ENCODE measurements at regions of chr6 and their contacts with region 1.

Region 1: DNA sequence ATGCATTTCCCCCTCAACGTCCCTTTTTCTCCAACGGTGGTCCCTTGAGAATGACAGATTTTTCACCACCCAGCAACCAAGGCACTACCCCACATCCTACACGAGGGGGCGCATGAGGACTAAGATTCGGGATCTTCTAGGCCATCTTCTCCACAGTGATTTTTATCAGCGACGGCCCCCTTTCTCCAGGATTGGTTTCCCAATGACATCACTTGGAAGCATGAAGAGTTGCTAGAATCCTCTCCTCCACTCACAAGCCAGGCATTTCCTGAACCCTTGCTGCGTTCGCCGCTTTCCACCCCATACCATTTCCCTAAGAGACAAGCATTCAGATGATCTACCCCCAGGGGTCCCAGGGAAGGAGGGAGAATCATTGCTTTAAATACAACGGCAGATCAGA is 252.0 kb downstream of the HIVEP2 start:
- DNase-seq: peak; percentile 82
- H3K4me3 ChIP-seq: no peak overlapping the region
- H3K27ac ChIP-seq: no peak overlapping the region
- H3K4me1 ChIP-seq: peaks cover 0 to 34% (median 20%) of the 10 kb centered on the region in 4 donors
- H3K27me3 ChIP-seq: no peaks in the 10 kb centered on the region
- CTCF ChIP-seq: peak; percentile 78 to 96 (median 94)
- EP300 ChIP-seq: no peak
- POLR2A ChIP-seq: no peak

Region 2: DNA sequence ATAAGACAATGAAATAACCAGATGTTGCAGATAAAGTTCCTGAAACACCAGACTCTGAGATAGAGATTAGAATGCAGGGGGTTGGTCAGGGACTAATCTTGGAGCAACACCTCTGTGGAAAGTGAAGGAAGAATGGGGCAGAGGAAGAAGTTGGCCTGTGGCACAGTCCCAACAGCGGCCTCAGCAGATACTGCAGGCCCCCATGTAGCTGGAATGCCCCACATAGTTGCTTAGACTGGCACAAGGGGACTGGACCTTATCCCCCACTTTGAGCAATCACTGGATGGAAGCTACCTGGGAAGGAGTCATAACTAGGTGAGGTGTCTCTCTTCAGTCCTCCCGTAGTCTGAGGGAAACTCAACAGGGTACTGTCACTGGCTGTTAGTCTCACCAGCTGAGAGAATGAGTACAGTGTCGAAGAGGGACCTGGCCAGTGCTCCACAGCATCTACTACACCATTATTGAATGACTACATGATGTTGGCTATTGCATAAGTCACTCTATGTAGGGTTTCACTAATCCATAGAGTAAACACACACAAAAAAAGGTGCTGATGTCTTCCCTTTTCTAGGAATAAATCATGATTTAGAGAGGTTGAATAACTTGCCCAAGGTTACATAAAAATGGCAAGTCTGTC is 343.6 kb before region 1 on chr6:
- intact Hi-C with region 1: no loop called
- DNase-seq: no peak
- H3K4me3 ChIP-seq: no peak overlapping the region
- H3K27ac ChIP-seq: no peak overlapping the region
- H3K4me1 ChIP-seq: no peaks in the 10 kb centered on the region
- H3K27me3 ChIP-seq: no peaks in the 10 kb centered on the region
- CTCF ChIP-seq: no peak
- EP300 ChIP-seq: no peak
- POLR2A ChIP-seq: no peak

Region 3: DNA sequence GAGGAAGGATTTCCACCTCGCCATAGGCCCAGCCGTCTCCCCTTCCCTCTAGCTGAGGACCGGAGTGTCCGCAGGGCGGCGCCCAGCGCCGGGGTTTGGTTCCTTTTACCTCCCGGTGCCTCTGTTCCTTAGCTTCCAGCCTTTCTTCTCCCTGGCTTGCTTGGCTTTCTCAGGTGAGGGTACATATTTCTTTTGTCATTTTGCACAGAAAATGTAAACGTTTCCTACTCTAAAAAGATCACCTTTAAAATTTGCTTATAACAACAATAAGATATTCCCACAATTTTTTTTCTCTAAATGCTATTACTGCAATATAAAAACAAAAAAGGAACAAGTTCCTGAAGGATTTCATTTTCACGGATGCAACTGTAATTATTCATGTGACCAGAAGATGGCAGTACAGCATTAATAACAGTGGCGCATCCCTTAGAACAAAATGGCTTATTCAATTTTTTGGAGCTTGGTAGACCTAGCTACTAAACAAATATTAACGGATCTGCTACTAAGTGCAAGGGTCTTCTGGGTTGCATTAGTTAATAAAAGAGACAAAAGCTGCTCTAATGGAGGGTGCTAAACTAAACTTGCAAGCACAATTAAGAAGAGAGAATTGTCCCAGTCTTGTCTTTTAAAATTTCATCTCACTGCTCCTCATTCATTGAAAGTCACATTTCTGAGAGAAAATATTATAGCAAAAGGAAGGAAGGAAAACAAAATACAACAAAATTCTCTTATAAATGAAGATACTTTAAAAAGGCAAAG is 218.2 kb before region 1 on chr6:
- intact Hi-C with region 1: loop called (anchors 5 kb)
- DNase-seq: no peak
- H3K4me3 ChIP-seq: no peak overlapping the region
- H3K27ac ChIP-seq: no peak overlapping the region
- H3K4me1 ChIP-seq: no peaks in the 10 kb centered on the region
- H3K27me3 ChIP-seq: no peaks in the 10 kb centered on the region
- CTCF ChIP-seq: peak; percentile 60 to 85 (median 64)
- EP300 ChIP-seq: no peak
- POLR2A ChIP-seq: no peak

Region 4: GRCh38 chr6:142537612-142538478 is 155.1 kb before region 1 on chr6:
- intact Hi-C with region 1: no loop called
- DNase-seq: no peak
- H3K4me3 ChIP-seq: no peak overlapping the region
- H3K27ac ChIP-seq: no peak overlapping the region
- H3K4me1 ChIP-seq: peaks cover 0 to 3% (median under 1%) of the 10 kb centered on the region in 4 donors
- H3K27me3 ChIP-seq: no peaks in the 10 kb centered on the region
- CTCF ChIP-seq: peak in 1 of 4 experiments; percentile 24
- EP300 ChIP-seq: no peak
- POLR2A ChIP-seq: no peak

Region 5: DNA sequence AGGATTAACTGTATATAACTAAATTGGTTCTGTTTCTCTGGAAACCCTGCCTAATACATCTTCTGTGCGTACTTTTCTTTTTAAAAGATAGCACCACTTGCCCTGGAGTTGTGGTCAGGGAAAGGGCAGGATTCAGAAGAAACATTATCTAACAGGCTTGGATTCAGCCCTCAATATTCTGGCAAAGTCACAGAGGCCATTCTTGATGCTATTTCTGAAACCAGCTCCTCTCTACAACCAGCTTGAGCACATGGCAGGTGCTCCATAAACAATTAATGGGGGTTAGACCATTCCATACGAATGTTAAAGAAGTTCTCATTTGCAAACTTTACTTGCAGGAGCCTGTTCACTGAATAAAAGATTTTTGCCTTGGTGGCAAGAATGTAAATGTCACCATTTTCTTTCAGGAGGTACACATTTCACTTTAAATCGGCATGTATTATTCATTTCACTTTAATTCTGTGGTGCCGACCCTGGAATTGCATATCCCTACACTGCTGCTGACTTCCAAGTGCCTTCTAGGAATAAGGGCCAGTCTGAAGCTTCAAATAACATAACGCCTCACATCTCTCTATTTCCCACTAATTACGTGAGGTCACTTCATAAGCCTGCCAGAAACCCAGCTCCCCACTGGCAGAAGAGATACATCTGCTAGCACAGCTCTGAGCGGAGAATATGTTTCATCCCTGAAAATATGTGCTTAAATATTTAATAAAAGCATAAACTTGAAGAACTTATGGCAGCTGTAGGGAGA is 142.5 kb before region 1 on chr6:
- intact Hi-C with region 1: no loop called
- DNase-seq: no peak
- H3K4me3 ChIP-seq: no peak overlapping the region
- H3K27ac ChIP-seq: no peak overlapping the region
- H3K4me1 ChIP-seq: no peaks in the 10 kb centered on the region
- H3K27me3 ChIP-seq: no peaks in the 10 kb centered on the region
- CTCF ChIP-seq: no peak
- EP300 ChIP-seq: no peak
- POLR2A ChIP-seq: no peak

Region 6: GRCh38 chr6:142728910-142729481 is 36.1 kb after region 1 on chr6:
- intact Hi-C with region 1: no loop called
- DNase-seq: no peak
- H3K4me3 ChIP-seq: no peak overlapping the region
- H3K27ac ChIP-seq: no peak overlapping the region
- H3K4me1 ChIP-seq: no peaks in the 10 kb centered on the region
- H3K27me3 ChIP-seq: no peaks in the 10 kb centered on the region
- CTCF ChIP-seq: no peak
- EP300 ChIP-seq: no peak
- POLR2A ChIP-seq: no peak

Region 7: GRCh38 chr6:143026696-143027449 is 333.9 kb after region 1 on chr6:
- intact Hi-C with region 1: loop called (anchors 2 kb)
- DNase-seq: no peak
- H3K4me3 ChIP-seq: no peak overlapping the region
- H3K27ac ChIP-seq: no peak overlapping the region
- H3K4me1 ChIP-seq: peaks cover 0 to 4% (median 0%) of the 10 kb centered on the region in 4 donors
- H3K27me3 ChIP-seq: no peaks in the 10 kb centered on the region
- CTCF ChIP-seq: peak in 3 of 4 experiments; percentile 37 to 64 (median 45)
- EP300 ChIP-seq: no peak
- POLR2A ChIP-seq: no peak

Region 8: DNA sequence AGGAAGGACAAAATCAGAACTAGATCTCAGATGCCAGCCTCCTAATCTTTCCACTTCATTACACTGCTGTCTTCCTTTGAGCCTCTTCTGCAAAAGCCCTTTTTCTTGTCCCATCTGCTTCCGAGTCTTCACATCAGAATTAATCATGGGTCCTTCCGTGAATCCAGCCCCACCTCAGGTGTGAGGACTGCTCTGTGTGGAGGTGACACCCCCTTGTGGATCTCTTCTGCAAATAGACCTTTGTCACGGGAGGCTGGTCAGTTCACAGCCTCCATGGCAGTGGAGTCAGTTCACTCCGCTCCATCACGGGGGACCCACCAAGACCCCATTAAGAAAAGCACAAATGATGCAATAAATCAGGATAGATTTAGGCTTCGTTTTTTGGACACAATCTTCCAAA is 586.4 kb after region 1 on chr6:
- intact Hi-C with region 1: loop called (anchors 10 kb)
- DNase-seq: no peak
- H3K4me3 ChIP-seq: no peak overlapping the region
- H3K27ac ChIP-seq: no peak overlapping the region
- H3K4me1 ChIP-seq: peaks cover 0 to 10% (median 8%) of the 10 kb centered on the region in 4 donors
- H3K27me3 ChIP-seq: no peaks in the 10 kb centered on the region
- CTCF ChIP-seq: no peak
- EP300 ChIP-seq: no peak
- POLR2A ChIP-seq: no peak

Region 9: DNA sequence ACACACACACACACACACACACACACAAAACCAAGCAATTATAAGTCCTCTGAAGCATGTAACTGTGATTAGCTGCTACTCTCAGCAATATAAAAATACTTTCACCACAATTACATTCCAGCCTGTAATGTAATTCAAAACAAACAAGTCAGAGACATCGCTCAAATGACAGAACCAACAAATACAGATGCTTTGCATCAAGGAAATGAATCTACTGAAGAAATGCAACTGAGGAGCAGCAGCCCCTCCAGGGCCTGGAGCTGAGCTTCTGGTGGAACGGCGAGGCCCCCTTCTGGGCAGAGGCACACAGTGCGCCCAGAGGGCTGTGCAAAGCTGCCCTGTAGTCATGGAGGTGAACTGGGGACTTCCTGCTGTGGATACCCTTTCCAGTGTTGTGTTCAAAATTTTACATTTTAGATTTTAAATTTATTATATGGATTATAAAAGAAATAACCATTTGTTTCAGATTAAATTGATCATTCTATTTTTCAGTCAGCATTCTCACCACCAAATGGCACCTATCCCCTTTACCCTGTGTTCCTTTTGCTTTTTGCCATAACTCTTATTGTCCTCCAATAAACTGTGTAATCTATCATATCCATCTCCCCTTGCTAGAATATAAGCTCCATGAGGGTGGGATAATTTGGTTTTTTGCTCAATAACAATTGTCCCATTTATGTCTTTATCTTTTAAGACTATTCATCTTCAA is 734.3 kb after region 1 on chr6:
- intact Hi-C with region 1: loop called (anchors 2 kb)
- DNase-seq: peak; percentile 78
- H3K4me3 ChIP-seq: no peak overlapping the region
- H3K27ac ChIP-seq: no peak overlapping the region
- H3K4me1 ChIP-seq: no peaks in the 10 kb centered on the region
- H3K27me3 ChIP-seq: no peaks in the 10 kb centered on the region
- CTCF ChIP-seq: peak; percentile 56 to 93 (median 78)
- EP300 ChIP-seq: no peak
- POLR2A ChIP-seq: no peak